OCI-LY7 (cell line): ENCODE measurements at regions of chr2 and their contacts with region 1.

Region 1: GRCh38 chr2:218332920-218333645 is 23.6 kb upstream of the CATIP start:
- DNase-seq: peak; percentile 71
- H3K4me3 ChIP-seq: peak overlapping the region; percentile 59
- H3K27ac ChIP-seq: peak overlapping the region; percentile 100
- H3K4me1 ChIP-seq: peaks cover 85% of the 10 kb centered on the region
- CTCF ChIP-seq: no peak

Region 2: DNA sequence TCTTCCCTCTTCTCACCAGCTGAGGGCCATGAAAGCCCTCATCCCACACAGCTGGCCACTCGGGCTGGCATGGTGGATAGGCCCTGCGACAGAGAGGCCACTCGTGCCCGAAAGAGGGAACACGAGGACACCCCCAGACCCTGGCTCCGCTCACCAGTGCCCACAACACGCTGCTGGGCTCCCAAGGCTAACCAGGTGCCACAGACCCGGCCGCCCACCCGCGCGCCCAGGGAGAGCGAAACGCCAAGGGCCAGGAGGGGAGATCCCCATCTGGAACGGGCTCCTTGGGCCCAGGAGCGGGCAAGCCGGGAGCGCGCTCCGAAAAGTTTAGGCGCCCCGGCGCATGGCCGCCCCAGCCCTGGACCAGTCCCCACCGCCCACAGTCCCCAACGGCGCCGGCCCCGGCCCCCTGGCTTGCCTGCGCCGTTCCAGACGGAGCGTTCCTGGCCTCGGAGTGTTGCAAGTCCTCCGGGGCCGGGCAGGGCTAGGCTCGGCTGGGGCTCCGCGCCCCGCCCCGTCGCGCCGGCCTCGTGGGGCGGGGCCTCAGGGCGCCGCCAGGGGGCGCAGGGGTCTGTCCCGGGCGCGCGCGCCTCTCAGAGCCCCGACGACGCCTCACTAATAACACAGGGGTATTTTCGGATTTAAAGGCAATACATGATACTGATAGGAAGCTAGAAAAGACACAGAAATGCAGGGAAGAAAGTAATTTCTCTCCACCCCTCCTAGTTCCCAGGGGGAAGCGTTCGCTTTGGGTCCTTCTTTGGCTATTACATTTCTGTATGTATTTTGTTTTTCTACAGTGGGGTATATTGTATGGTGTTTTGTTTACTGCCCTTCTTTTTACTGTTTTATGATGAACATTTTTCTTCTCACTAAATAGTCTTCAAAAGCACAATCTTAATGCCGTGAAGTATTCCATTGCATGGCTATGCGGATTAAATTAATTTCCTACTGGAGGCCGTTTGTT is 40.8 kb before region 1 on chr2 and contains the start of gene TMBIM1:
- CTCF ChIA-PET with region 1: no interaction called
- POLR2A ChIA-PET with region 1: interaction called, 10 read pairs
- intact Hi-C with region 1: no loop called
- DNase-seq: peak; percentile 86
- H3K4me3 ChIP-seq: peak within 1 kb of the TSS; percentile 89
- H3K27ac ChIP-seq: peak within 1 kb of the TSS; percentile 91
- H3K4me1 ChIP-seq: peaks cover 66% of the 10 kb centered on the region
- CTCF ChIP-seq: peak; percentile 93
- total RNA-seq, gene TMBIM1: 18.9 and 30.3 TPM in 2 replicates

Region 3: DNA sequence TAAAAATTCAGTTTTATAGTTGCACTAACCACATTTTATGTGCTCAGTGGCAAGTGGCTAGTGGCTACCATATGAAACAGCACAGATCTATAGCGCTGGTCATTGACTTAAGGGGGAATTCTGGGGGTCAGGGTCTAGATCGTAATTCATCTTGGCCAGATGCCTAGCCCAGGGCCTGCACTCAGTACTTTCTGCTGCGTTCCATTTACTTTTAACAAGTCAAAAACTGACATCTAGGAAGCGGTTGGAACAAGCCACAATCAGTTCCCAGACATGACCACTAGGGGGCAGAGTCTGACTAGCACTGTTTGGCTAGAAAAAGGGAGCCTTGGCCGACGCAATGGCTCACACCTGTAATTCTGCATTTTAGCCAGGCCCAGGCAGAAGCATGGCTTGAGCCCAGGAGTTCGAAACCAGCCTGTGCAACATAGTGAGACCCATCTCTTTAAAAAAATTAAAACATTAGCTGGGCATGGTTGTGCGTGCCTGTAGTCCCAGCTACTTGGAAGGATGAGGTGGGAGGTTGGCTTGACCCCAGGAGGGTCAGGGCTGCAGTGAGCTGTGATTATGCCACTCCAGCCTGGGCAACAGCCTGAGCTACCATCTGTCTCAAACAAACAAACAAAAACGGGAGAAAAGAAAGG is 31.8 kb before region 1 on chr2:
- CTCF ChIA-PET with region 1: interaction called, 9 read pairs
- POLR2A ChIA-PET with region 1: interaction called, 9 read pairs
- intact Hi-C with region 1: loop called (anchors 1 kb)
- DNase-seq: peak; percentile 95
- H3K4me3 ChIP-seq: no peak overlapping the region
- H3K27ac ChIP-seq: no peak overlapping the region
- H3K4me1 ChIP-seq: peaks cover 36% of the 10 kb centered on the region
- CTCF ChIP-seq: peak; percentile 96

Region 4: GRCh38 chr2:218307415-218308090 is 25.5 kb before region 1 on chr2:
- CTCF ChIA-PET with region 1: interaction called, 9 read pairs
- POLR2A ChIA-PET with region 1: interaction called, 15 read pairs
- intact Hi-C with region 1: no loop called
- DNase-seq: no peak
- H3K4me3 ChIP-seq: no peak overlapping the region
- H3K27ac ChIP-seq: no peak overlapping the region
- H3K4me1 ChIP-seq: peaks cover 27% of the 10 kb centered on the region
- CTCF ChIP-seq: no peak

Region 5: GRCh38 chr2:218317232-218317630 is 15.9 kb before region 1 on chr2:
- CTCF ChIA-PET with region 1: no interaction called
- POLR2A ChIA-PET with region 1: interaction called, 28 read pairs
- intact Hi-C with region 1: no loop called
- DNase-seq: no peak
- H3K4me3 ChIP-seq: no peak overlapping the region
- H3K27ac ChIP-seq: no peak overlapping the region
- H3K4me1 ChIP-seq: peaks cover 40% of the 10 kb centered on the region
- CTCF ChIP-seq: no peak

Region 6: GRCh38 chr2:218360447-218360846 is 27.4 kb after region 1 on chr2:
- CTCF ChIA-PET with region 1: interaction called, 6 read pairs
- POLR2A ChIA-PET with region 1: interaction called, 8 read pairs
- intact Hi-C with region 1: loop called (anchors 1 kb)
- DNase-seq: no peak
- H3K4me3 ChIP-seq: no peak overlapping the region
- H3K27ac ChIP-seq: no peak overlapping the region
- H3K4me1 ChIP-seq: peaks cover 23% of the 10 kb centered on the region
- CTCF ChIP-seq: no peak

Region 7: DNA sequence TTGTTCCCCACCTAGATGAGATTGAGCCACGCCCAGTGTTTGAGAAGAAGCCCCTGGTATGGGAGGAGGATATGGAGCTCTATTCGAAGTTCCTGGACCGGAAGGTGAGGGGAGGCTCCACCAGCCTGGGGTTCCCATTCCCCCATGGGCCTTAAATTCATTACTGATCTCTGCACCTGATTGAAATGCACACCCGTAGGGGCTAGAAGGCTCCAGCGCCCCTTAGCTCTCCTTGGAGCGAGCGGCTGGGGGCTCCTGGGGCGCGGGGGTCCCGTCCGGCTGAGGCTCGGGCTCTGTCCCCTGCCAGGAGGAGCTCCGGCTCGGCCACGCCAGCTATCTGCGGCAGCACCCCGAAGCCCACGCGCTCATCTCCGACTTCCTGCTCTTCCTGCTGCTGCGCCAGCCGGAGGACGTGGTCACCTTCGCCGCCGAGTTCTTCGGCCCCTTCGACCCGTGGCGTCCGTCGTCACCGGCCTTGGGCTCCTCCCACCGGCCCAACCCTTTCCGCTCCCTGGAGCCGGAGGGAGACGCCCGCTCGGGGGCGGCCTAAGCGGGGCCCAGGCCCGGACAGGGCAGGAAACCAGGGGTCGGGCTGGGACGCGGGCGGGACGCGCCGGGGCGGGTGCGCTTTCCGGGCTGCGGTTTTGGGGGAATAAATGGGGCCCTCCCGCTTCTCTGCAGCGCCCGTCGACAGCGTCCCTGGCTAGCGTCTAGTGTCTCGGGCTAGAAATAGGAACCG is 34.5 kb after region 1 on chr2:
- CTCF ChIA-PET with region 1: no interaction called
- POLR2A ChIA-PET with region 1: interaction called, 10 read pairs
- intact Hi-C with region 1: no loop called
- DNase-seq: peak; percentile 81
- H3K4me3 ChIP-seq: peak overlapping the region; percentile 68
- H3K27ac ChIP-seq: peak overlapping the region; percentile 40
- H3K4me1 ChIP-seq: peaks cover 66% of the 10 kb centered on the region
- CTCF ChIP-seq: peak; percentile 31; the same call in 1 of the 2 replicates